Left cardiac atrium (tissue), 4 donors: ENCODE measurements at regions of chr14 and their contacts with region 1.

Region 1: GRCh38 chr14:19895282-19895681 is 20.3 kb downstream of the OR4K2 start:
- DNase-seq: no peak
- ATAC-seq: no peak

Region 2: GRCh38 chr14:19947413-19948090 is 52.3 kb after region 1 on chr14:
- intact Hi-C with region 1: loop called in 1 of 2 experiments (anchors 10 kb)
- DNase-seq: no peak
- ATAC-seq: no peak